Stomach (tissue), 19 donors: ENCODE measurements at regions of chr6 and their contacts with region 1.

Region 1: DNA sequence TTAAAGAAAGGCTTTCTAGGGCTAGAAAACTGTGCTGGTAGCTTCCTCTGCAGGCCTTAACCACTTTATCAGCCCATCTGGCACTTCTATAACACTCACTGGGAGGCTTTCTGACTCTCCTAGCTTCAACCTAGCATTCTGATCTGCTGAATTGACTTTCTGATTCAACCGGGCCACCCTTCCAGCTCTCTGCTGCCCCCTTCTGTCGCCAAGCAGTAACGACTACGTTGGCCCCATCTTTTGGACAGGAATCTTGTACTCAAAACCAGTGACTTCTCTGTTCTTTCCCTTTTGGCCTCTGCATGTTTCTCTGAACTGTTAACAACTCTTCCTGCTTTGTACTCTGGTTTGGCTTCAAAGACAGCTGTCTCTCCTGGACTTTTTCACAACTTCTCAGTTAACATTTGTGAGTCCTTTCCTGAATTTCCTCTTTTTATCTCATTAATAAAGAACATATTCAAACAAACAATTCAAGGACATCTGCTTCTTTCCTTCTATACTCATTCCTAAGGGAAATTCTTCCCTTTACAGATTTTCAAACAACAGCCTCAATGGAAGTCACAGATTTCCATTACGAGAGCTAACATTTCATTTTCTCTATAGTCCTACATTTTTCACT is 43.9 kb upstream of the FAM135A start:
- DNase-seq: peak; percentile 76 to 90
- H3K4me3 ChIP-seq: no peak overlapping the region
- H3K27ac ChIP-seq: no peak overlapping the region
- H3K4me1 ChIP-seq: peaks cover 0 to 26% (median 10%) of the 10 kb centered on the region in 4 donors
- H3K27me3 ChIP-seq: peaks cover 0 to 3% (median 0%) of the 10 kb centered on the region in 3 donors
- CTCF ChIP-seq: peak in 5 of 7 experiments; percentile 81 to 92 (median 89)
- EP300 ChIP-seq: no peak
- POLR2A ChIP-seq: no peak

Region 2: DNA sequence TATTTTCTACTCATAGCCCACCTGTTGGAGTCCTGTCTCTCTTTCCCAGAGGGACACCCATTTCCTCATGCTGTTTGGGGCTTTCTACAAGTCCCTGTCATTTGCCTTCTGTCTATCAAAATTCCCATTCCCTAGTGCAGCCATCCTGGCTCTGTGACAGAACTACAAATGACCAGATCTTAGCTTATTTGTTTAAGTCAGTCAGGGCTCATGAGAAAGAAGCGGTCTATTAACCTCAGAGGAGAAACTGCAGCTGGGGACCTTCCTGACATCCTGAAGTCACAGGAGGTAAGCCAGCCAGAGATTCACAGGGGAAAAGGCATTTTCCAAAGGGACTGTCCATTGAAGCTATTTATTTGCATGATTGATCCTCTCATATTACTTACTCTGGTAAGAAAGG is 64.8 kb before region 1 on chr6:
- intact Hi-C with region 1: loop called (anchors 5 kb)
- DNase-seq: no peak
- H3K4me3 ChIP-seq: no peak overlapping the region
- H3K27ac ChIP-seq: no peak overlapping the region
- H3K4me1 ChIP-seq: no peaks in the 10 kb centered on the region
- H3K27me3 ChIP-seq: peaks cover 0 to 3% (median 0%) of the 10 kb centered on the region in 3 donors
- CTCF ChIP-seq: no peak
- EP300 ChIP-seq: no peak
- POLR2A ChIP-seq: no peak

Region 3: GRCh38 chr6:70413114-70413991 is 43.9 kb after region 1 on chr6 and contains the start of gene FAM135A:
- intact Hi-C with region 1: no loop called
- DNase-seq: peak; percentile 99 to 100
- H3K4me3 ChIP-seq: peak within 1 kb of the TSS; percentile 93 to 97 (median 95)
- H3K27ac ChIP-seq: peak within 1 kb of the TSS; percentile 85 to 96 (median 90)
- H3K4me1 ChIP-seq: peaks cover 6 to 58% (median 27%) of the 10 kb centered on the region in 4 donors
- H3K27me3 ChIP-seq: no peaks in the 10 kb centered on the region
- CTCF ChIP-seq: no peak
- EP300 ChIP-seq: no peak
- POLR2A ChIP-seq: peak in 1 of 4 donors; percentile 27
- total RNA-seq, gene FAM135A: 25.9 to 121 (median 58.8) TPM

Region 4: GRCh38 chr6:70797625-70798024 is 428.2 kb after region 1 on chr6:
- intact Hi-C with region 1: no loop called
- DNase-seq: no peak
- H3K4me3 ChIP-seq: no peak overlapping the region
- H3K27ac ChIP-seq: no peak overlapping the region
- H3K4me1 ChIP-seq: no peaks in the 10 kb centered on the region
- H3K27me3 ChIP-seq: no peaks in the 10 kb centered on the region
- CTCF ChIP-seq: no peak
- EP300 ChIP-seq: no peak
- POLR2A ChIP-seq: no peak